ENCODE measurements at regions of chr6 and their contacts with region 1.

Region 1: DNA sequence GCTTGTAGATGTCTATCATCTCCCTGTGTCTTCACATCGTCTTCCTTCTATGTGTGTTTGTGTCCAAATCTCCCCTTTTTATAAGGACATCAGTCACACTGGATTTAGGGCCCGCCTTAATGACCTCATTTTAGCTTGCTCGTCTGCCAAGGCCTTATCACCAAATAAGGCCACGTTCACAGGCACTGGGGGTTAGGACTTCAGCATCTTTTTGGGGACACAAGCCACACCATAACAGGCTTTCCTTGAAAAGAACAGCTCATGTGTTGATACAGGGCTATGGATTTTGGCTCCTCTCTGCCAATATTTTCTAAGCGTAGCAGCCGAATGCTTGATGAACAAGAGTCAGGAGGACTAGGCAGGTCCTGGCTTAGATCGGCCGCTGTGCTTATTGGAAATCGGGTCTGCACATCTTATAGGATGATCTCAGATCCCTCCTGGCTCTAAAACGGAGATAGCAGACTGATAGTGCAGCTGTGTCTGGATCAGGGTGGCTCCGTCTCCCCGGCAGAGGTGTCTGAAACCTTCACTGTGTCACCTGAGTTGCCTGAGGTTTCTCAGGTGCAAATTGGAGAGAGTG is 16.2 kb upstream of the TMEM181 start:
- DNase-seq: no peak
- H3K4me3 ChIP-seq: no peak overlapping the region
- H3K27ac ChIP-seq: no peak overlapping the region
- H3K4me1 ChIP-seq: no peaks in the 10 kb centered on the region
- H3K27me3 ChIP-seq: peaks cover 3% of the 10 kb centered on the region
- CTCF ChIP-seq: no peak

Region 2: DNA sequence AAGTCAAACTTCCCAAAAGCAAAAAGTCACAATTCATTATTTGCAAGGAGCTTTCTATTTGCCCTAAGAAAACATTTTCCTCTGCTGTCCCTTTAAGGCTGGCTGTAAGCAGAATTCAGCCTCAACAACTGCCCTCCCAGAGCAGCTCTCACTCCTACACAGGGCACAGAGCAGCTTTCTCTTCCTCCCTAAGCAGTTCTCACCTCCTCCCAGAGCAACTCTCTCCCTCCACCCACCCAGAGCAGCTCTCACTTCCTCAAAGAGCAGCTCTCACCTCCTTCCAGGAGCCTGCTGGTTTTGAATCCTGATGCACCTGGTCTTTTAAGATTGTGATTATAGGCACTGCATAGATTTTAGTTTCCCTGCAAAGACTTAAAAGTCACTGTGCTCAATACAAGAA is 104.4 kb before region 1 on chr6:
- CTCF ChIA-PET with region 1: no interaction called
- dilution Hi-C with region 1: loop called (anchors 5 kb)
- in situ Hi-C with region 1: no loop called
- intact Hi-C with region 1: no loop called
- DNase-seq: no peak
- H3K4me3 ChIP-seq: no peak overlapping the region
- H3K27ac ChIP-seq: no peak overlapping the region
- H3K4me1 ChIP-seq: no peaks in the 10 kb centered on the region
- H3K27me3 ChIP-seq: no peaks in the 10 kb centered on the region
- CTCF ChIP-seq: no peak

Region 3: DNA sequence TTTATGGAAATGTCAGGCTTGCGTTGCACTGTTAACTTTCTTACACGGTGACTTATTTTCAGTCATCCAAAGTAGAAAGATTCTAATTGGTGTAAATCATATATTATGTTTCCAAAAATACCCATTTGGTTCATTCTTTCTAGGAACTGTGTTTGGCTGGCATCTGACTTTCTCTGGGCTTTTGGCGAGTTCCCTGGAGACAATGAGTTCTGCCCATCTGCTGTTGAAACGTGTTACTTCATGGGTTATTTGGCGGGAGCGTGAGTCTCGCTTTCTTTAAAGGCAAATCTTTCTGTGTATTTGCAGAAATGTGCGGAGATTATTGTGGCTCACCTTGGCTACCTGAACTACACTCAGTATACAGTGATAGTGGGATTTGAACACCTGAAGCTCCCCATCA is 45.7 kb after region 1 on chr6:
- CTCF ChIA-PET with region 1: no interaction called
- dilution Hi-C with region 1: loop called (anchors 5 kb)
- in situ Hi-C with region 1: no loop called
- intact Hi-C with region 1: no loop called
- DNase-seq: no peak
- H3K4me3 ChIP-seq: no peak overlapping the region
- H3K27ac ChIP-seq: no peak overlapping the region
- H3K4me1 ChIP-seq: no peaks in the 10 kb centered on the region
- H3K27me3 ChIP-seq: no peaks in the 10 kb centered on the region
- CTCF ChIP-seq: no peak

Region 4: GRCh38 chr6:158758451-158758861 is 214.8 kb after region 1 on chr6:
- CTCF ChIA-PET with region 1: no interaction called
- dilution Hi-C with region 1: no loop called
- in situ Hi-C with region 1: no loop called
- intact Hi-C with region 1: no loop called
- DNase-seq: no peak
- H3K4me3 ChIP-seq: no peak overlapping the region
- H3K27ac ChIP-seq: no peak overlapping the region
- H3K4me1 ChIP-seq: peaks cover 11% of the 10 kb centered on the region
- H3K27me3 ChIP-seq: no peaks in the 10 kb centered on the region
- CTCF ChIP-seq: no peak